ENCODE measurements at regions of chr14 and their contacts with region 1.

Region 1: GRCh38 chr14:37139710-37140109 is 32.7 kb downstream of the SLC25A21 start:
- DNase-seq: no peak
- H3K4me3 ChIP-seq: no peak overlapping the region
- H3K27ac ChIP-seq: no peak overlapping the region
- H3K4me1 ChIP-seq: no peaks in the 10 kb centered on the region
- H3K27me3 ChIP-seq: no peaks in the 10 kb centered on the region; the same call in 1 of the 2 replicates
- CTCF ChIP-seq: no peak
- EP300 ChIP-seq: no peak
- RAD21 ChIP-seq: no peak

Region 2: DNA sequence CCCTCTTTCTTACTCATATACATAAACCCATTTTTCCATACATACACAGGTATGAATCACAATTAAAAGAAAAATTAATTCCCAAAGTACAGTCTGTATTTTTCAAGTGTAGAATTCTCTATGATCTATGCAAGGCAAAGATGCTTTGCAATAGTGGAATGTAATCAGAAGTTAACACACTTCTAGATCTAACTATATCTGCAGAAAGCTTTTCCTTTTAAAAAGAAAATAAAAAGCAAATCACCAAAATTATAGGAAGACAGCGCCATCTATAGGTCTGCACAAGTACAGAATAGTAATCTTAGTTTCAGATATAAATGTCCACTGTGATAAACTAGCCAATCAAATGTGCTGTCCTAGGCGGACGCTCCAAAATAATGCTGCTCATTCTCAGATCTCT is 10.7 kb after region 1 on chr14:
- CTCF ChIA-PET with region 1: interaction called, 20 read pairs
- POLR2A ChIA-PET with region 1: no interaction called
- DNase-seq: peak; percentile 5
- H3K4me3 ChIP-seq: peak overlapping the region in 1 of 2 experiments; percentile 29; a peak in 1 of 4 replicates
- H3K27ac ChIP-seq: no peak overlapping the region
- H3K4me1 ChIP-seq: no peaks in the 10 kb centered on the region
- H3K27me3 ChIP-seq: no peaks in the 10 kb centered on the region
- CTCF ChIP-seq: peak; percentile 65
- EP300 ChIP-seq: no peak
- RAD21 ChIP-seq: peak; percentile 8; the same call in 1 of the 2 replicates

Measured in SK-N-SH (cell line).